Calu3 (cell line): ENCODE measurements at regions of chr5 and their contacts with region 1.

Region 1: DNA sequence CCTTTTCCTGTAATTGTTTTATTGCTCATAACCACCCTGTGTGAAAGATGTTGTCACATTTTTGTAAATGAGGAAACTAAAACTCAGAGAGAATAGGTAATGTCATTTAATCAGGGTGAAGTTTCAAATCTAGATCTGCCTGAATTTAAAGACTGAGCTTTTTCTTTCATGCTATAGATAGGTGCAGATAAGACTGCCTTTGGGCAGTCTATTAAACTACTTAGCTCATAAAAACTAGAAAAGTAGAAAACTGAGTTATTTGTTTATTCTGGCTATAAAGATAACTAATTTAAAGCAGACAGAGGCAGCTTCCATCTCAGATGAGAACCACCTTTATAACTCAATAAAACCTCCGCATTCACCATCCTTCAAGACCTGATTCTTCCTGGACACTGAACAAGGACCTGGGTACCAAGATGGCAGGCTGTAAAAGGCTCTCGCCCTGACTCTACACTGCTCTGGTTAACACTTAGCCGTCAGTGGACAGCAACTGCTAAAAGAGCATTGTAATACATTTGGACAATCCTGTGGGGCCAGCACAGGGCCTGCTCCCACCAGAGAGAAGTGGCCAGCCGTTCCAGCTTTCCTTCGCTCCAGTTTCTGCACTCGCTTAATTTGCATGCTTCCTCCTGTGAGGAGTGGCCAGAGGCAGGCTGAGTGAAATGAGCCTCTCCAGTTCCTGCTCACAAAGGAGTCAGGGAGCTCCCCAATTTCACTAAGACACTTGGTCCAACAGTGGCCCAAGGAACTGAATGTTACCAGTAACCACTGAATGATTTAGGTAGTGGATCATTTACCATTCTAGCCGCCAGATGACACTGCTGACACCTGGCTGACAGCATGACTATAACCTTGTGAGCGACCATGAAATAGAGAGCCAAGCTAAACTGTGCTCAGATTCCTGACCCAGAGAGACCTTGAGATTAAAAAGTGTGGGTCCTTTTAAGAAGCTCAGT is 566.4 kb downstream of the EFNA5 start:
- DNase-seq: peak; percentile 53
- H3K4me3 Mint-ChIP-seq: no peak overlapping the region
- H3K27ac Mint-ChIP-seq: peak overlapping the region; percentile 25
- H3K4me1 Mint-ChIP-seq: peaks cover 29% of the 10 kb centered on the region
- H3K27me3 Mint-ChIP-seq: no peaks in the 10 kb centered on the region
- CTCF ChIP-seq: peak; percentile 40

Region 2: DNA sequence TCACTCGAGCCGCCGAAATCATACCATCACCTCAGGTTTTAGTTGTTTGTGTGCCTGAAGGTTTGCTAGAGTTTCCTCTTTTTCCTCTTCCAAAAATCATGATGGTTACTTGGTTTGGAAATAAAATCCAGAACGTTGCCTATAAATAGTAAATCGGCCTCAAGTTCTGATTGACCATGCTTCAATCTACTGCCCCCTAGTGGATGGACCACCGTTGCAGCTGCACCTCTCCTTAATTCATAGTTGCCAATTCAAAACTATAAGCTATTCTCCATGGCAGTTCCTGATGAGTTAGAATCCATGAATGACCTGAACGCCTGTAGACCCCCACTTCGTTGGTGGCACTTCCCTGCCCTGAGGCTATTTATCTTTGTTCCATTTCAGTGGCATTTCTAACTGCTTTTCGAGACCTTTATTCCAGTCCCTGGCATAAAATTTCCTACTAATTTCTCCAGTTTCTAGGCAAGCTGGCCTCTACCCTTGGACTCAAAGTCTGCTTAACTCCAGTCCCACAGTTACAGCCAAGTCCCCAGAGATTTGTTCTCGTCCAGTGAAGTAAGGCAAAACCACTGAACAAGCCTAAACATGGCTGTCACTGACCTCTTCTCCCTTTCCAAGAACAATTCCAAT is 143.9 kb after region 1 on chr5:
- CTCF ChIA-PET with region 1: interaction called, 14 read pairs
- intact Hi-C with region 1: loop called (anchors 1 kb)
- DNase-seq: peak; percentile 87
- H3K4me3 Mint-ChIP-seq: no peak overlapping the region
- H3K27ac Mint-ChIP-seq: no peak overlapping the region
- H3K4me1 Mint-ChIP-seq: no peaks in the 10 kb centered on the region
- H3K27me3 Mint-ChIP-seq: no peaks in the 10 kb centered on the region
- CTCF ChIP-seq: peak; percentile 90

Region 3: GRCh38 chr5:107352576-107352975 is 248.3 kb after region 1 on chr5:
- CTCF ChIA-PET with region 1: no interaction called
- intact Hi-C with region 1: loop called (anchors 5 kb)
- DNase-seq: no peak
- H3K4me3 Mint-ChIP-seq: no peak overlapping the region
- H3K27ac Mint-ChIP-seq: no peak overlapping the region
- H3K4me1 Mint-ChIP-seq: peaks cover 12% of the 10 kb centered on the region
- H3K27me3 Mint-ChIP-seq: no peaks in the 10 kb centered on the region
- CTCF ChIP-seq: peak; percentile 14

Region 4: DNA sequence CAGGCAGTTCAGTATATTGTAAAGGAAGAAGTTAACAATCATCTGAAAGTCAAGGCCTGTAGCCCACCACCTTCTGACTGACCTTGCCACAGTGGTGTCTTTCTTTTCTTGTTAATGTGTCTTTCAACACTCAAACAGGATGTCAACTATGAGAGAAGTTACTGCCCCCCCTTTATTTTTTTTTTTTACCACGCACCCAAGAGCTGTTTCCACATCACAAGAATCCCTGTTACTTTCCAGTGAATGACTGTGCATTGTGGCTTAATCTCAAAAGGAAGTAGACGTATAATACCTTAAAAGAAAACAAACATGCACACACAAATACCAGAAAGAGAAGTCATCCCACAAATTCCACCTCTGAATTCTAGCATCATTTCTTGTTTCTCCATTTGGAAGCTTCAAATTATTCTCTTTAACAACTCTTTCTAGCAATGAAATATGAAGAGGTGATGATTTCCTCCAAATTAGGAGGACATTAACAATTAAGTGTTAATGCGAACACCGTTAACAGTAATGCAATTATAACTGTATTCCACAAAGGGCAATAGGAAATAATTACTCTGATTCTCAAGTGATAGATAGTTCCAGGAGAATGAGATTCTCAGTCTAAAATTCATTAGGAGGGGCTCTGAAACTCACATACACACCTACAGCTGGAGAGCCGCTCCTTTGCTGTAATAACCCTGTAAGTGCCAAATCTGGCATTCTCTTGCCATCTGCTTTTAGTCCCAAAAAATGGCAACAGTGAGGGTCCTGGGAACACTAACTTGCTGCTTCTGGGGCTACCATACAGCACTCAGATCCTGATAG is 365.4 kb after region 1 on chr5:
- CTCF ChIA-PET with region 1: no interaction called
- intact Hi-C with region 1: loop called (anchors 10 kb)
- DNase-seq: peak; percentile 66
- H3K4me3 Mint-ChIP-seq: peak overlapping the region; percentile 45
- H3K27ac Mint-ChIP-seq: peak overlapping the region; percentile 96
- H3K4me1 Mint-ChIP-seq: peaks cover 95% of the 10 kb centered on the region
- H3K27me3 Mint-ChIP-seq: no peaks in the 10 kb centered on the region
- CTCF ChIP-seq: no peak